Colonic mucosa (tissue), 4 donors: ENCODE measurements at regions of chr7 and their contacts with region 1.

Region 1: DNA sequence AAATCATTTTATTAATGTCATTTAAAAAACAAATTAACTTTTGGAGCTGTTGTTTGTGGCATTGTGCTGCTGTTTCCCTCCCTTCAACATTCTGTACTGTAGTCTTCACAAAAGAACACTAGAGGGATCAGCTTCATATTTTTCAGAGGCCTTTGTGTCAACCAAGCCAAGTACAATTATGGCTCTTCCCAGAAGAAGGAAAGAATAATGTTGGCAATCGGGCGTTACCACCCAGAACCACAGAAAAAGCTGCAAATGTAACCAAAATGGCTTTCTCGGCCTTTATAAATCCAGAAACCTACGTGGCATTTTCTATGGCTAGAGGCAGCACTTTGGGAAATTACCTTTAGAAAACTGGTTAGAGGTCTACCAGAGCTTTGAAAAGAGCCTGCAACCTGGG is 98.8 kb upstream of the COL1A2 start:
- DNase-seq: no peak
- H3K4me3 ChIP-seq: no peak overlapping the region
- H3K27ac ChIP-seq: peak overlapping the region; percentile 16
- H3K4me1 ChIP-seq: no peaks in the 10 kb centered on the region
- H3K27me3 ChIP-seq: no peaks in the 10 kb centered on the region
- CTCF ChIP-seq: no peak

Region 2: DNA sequence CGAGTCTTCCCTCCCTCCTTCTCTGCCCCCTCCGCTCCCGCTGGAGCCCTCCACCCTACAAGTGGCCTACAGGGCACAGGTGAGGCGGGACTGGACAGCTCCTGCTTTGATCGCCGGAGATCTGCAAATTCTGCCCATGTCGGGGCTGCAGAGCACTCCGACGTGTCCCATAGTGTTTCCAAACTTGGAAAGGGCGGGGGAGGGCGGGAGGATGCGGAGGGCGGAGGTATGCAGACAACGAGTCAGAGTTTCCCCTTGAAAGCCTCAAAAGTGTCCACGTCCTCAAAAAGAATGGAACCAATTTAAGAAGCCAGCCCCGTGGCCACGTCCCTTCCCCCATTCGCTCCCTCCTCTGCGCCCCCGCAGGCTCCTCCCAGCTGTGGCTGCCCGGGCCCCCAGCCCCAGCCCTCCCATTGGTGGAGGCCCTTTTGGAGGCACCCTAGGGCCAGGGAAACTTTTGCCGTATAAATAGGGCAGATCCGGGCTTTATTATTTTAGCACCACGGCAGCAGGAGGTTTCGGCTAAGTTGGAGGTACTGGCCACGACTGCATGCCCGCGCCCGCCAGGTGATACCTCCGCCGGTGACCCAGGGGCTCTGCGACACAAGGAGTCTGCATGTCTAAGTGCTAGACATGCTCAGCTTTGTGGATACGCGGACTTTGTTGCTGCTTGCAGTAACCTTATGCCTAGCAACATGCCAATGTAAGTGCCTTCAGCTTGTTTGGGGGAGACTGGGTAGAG is 98.7 kb after region 1 on chr7 and contains the start of gene COL1A2:
- intact Hi-C with region 1: loop called (anchors 5 kb)
- DNase-seq: peak; percentile 52
- H3K4me3 ChIP-seq: peak within 1 kb of the TSS; percentile 24
- H3K27ac ChIP-seq: peak within 1 kb of the TSS; percentile 77
- H3K4me1 ChIP-seq: no peaks in the 10 kb centered on the region
- H3K27me3 ChIP-seq: no peaks in the 10 kb centered on the region
- CTCF ChIP-seq: no peak
- total RNA-seq, gene COL1A2: 55.6 to 131 TPM

Region 3: DNA sequence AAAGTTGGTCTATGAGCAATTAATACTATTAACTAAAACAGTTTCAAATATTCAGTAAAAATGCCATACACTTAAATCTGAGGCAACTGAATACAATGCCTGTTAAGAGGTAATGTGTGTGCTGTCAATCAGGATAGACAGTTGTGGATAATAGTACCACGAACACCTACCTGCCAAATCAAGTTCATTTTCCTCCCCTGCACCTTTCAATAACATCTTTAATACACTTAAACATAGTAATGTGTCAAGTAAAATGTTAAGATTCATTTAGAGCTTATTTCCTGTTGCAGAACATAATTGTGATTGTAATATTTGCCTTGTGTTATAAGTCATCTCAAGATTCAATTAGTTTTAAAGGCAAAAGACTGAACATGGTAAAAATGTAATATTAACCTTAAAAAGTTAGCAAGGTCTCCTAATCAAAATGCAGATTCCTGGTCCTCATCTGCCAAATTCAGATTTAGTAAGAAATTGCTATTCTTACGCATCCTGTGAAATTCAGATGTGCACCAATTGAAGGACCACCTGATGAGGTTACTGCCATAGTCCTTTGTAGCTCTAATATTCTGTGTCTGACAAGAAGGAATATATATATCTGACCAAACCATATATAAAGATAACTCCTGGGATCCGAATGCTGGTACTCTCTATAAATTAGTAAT is 135.9 kb after region 1 on chr7:
- intact Hi-C with region 1: loop called (anchors 5 kb)
- DNase-seq: no peak
- H3K4me3 ChIP-seq: no peak overlapping the region
- H3K27ac ChIP-seq: no peak overlapping the region
- H3K4me1 ChIP-seq: no peaks in the 10 kb centered on the region
- H3K27me3 ChIP-seq: no peaks in the 10 kb centered on the region
- CTCF ChIP-seq: no peak

Region 4: DNA sequence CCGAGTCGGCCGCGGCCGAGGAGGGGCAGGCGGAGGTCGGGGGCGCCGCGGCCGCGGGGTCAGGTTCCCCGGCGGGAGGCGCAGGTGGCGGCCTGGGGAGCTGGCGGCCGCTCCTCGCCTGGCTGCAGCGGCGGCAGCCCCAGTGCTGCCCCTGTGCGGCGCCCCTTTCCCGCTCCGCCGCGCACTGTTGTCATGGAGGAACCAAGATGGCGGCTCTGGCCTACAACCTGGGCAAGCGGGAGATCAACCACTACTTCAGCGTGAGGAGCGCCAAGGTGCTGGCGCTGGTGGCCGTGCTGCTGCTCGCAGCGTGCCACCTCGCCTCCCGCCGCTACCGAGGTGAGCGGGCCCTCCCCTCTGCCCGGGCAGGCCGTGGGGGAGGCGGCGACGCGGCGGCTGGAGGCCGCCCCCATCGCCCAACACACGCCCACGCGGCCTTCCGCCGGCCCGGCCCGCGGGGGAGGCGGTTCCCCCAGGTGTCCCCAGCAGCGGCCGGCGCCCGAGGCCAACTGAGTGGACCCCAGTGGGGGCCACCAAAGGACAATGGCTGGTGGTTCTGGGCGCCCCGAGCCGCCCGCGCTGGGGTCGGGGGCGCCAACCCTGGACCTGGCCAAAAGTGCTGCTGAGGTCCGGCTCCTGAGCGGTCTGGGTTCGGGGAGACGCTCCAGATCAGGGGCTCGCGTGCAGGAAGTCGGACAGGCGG is 214.2 kb after region 1 on chr7:
- intact Hi-C with region 1: no loop called
- DNase-seq: peak; percentile 70
- H3K4me3 ChIP-seq: peak overlapping the region; percentile 88
- H3K27ac ChIP-seq: peak overlapping the region; percentile 96
- H3K4me1 ChIP-seq: peaks cover 12% of the 10 kb centered on the region
- H3K27me3 ChIP-seq: no peaks in the 10 kb centered on the region
- CTCF ChIP-seq: no peak